ENCODE measurements at regions of chr1 and their contacts with region 1.

Region 1: DNA sequence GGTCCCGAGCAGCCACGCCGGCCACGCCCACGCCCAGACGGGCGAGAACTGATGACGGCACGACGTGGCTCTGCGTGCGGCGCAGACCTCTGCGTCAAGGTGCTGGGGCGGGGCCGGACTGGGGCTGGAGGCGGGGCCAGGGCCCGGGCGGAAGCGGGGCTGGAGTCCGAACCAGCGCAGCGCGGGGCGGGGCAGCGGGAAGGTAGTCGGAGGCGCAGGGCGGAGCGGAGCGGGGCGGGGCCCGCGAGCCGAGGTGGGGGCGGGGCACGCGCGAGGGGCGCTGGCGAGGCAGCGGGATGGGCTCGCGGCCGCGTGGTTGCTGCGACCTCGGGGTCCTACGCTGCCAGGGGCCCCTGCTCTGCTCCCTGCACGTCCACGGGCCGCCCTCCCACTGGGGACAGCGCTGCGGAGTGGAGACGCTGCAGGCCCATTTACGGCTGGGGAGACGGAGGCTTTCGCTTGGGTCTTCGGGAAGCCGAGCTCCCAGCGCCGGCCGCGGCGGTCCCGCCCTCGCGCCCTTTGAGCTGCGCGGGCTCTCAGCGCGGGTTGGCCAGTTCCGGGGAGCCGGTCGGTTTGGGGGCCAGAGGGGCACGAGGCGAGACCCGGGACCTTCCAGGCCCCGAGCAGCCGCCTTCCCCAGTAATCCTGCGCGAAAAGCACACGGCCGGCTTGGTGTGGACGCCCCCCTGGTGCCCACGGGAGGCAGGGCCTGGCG is at the start of gene PEX10:
- DNase-seq: peak; percentile 96 to 98 (median 97)
- H3K4me3 ChIP-seq: peak within 1 kb of the TSS; percentile 47 to 70
- H3K4me3 Mint-ChIP-seq: peak within 1 kb of the TSS; percentile 82 to 94 (median 87)
- H3K27ac ChIP-seq: peak within 1 kb of the TSS; percentile 84
- H3K27ac Mint-ChIP-seq: peak within 1 kb of the TSS; percentile 75 to 99 (median 92)
- H3K4me1 ChIP-seq: peaks cover 55% of the 10 kb centered on the region
- H3K4me1 Mint-ChIP-seq: peaks cover 17 to 51% (median 32%) of the 10 kb centered on the region in 4 donors
- H3K27me3 ChIP-seq: no peaks in the 10 kb centered on the region
- H3K27me3 Mint-ChIP-seq: no peaks in the 10 kb centered on the region
- total RNA-seq, gene PEX10: 11.7 to 13.0 TPM

Region 2: GRCh38 chr1:2441746-2442145 is 29.1 kb after region 1 on chr1:
- CTCF ChIA-PET with region 1: no interaction called
- POLR2A ChIA-PET with region 1: no interaction called
- intact Hi-C with region 1: no loop called
- DNase-seq: no peak
- H3K4me3 ChIP-seq: no peak overlapping the region
- H3K4me3 Mint-ChIP-seq: no peak overlapping the region
- H3K27ac ChIP-seq: no peak overlapping the region
- H3K27ac Mint-ChIP-seq: no peak overlapping the region
- H3K4me1 ChIP-seq: peaks cover 5% of the 10 kb centered on the region
- H3K4me1 Mint-ChIP-seq: peaks cover 0 to 5% (median 1%) of the 10 kb centered on the region in 4 donors
- H3K27me3 ChIP-seq: peaks cover 5% of the 10 kb centered on the region
- H3K27me3 Mint-ChIP-seq: peaks cover 0 to 5% of the 10 kb centered on the region in 2 donors

Region 3: DNA sequence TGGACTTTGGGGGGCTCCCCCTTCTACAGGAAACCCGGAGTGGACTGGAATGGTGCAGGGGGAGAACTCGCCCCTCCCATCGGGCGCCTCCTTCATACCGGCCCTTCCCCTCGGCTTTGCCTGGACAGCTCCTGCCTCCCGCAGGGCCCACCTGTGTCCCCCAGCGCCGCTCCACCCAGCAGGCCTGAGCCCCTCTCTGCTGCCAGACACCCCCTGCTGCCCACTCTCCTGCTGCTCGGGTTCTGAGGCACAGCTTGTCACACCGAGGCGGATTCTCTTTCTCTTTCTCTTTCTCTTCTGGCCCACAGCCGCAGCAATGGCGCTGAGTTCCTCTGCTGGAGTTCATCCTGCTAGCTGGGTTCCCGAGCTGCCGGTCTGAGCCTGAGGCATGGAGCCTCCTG is 143.6 kb after region 1 on chr1 and contains the start of gene TNFRSF14:
- CTCF ChIA-PET with region 1: interaction called, 12 read pairs
- POLR2A ChIA-PET with region 1: interaction called, 36 read pairs
- intact Hi-C with region 1: no loop called
- DNase-seq: peak; percentile 77 to 88 (median 78)
- H3K4me3 ChIP-seq: peak within 1 kb of the TSS; percentile 95 to 98
- H3K4me3 Mint-ChIP-seq: peak within 1 kb of the TSS; percentile 92 to 99 (median 96)
- H3K27ac ChIP-seq: peak within 1 kb of the TSS; percentile 98
- H3K27ac Mint-ChIP-seq: peak within 1 kb of the TSS; percentile 95 to 100 (median 98)
- H3K4me1 ChIP-seq: peaks cover 43% of the 10 kb centered on the region
- H3K4me1 Mint-ChIP-seq: peaks cover 9 to 50% (median 30%) of the 10 kb centered on the region in 4 donors
- H3K27me3 ChIP-seq: no peaks in the 10 kb centered on the region
- H3K27me3 Mint-ChIP-seq: no peaks in the 10 kb centered on the region
- total RNA-seq, gene TNFRSF14: 170 to 173 TPM

Region 4: DNA sequence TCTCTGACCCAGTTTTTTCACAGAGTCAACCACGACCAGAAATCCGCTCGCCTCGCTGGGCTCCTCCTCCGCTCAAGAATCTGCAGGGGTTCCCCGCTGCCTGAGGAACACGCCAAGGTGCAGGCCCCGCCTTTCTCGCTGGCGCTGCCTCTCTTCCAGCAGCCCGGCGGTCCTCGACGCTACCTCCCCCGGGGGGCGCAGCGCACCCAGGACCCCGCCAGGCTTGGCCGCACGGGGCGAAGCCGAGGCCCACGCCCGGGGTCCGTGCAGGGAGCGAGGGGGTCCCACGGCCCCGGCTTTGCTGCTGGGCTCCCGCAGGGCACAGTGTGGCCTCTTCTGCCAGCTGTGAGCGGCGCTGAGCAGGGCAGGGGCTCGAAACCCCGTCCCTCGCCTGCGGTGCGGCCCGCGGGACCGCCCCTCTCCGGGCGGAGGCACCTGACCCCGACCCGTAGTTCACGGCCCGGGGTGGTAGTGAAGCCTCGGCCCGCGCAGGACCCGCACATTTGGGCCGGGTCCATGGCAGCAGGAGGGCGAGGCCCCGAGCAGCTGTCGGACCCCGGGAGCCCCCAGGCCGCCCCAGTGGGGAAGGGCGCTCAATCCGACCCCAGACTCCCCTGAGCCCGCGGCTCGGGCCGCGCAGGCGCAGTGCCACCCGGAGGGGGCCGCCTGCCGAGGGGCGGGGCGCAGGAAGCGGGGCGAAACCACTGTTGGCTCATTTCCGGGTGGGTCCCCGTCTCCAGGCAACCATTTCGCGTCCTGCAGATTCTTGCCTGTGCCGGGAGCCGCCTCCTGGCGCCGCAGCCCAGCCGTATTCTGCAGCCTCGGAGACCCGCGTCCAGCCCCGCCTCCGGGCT is 230.1 kb after region 1 on chr1:
- CTCF ChIA-PET with region 1: no interaction called
- POLR2A ChIA-PET with region 1: interaction called, 3 read pairs
- intact Hi-C with region 1: loop called (anchors 1 kb)
- DNase-seq: peak; percentile 95 to 96 (median 95)
- H3K4me3 ChIP-seq: peak overlapping the region; percentile 69 to 83
- H3K4me3 Mint-ChIP-seq: peak overlapping the region; percentile 85 to 94 (median 88)
- H3K27ac ChIP-seq: peak overlapping the region; percentile 99
- H3K27ac Mint-ChIP-seq: peak overlapping the region; percentile 85 to 99 (median 96)
- H3K4me1 ChIP-seq: peaks cover 16% of the 10 kb centered on the region
- H3K4me1 Mint-ChIP-seq: peaks cover 2 to 21% (median 10%) of the 10 kb centered on the region in 4 donors
- H3K27me3 ChIP-seq: no peaks in the 10 kb centered on the region
- H3K27me3 Mint-ChIP-seq: no peaks in the 10 kb centered on the region

Region 5: GRCh38 chr1:2801535-2802291 is 389.0 kb after region 1 on chr1 and contains the start of gene TTC34:
- CTCF ChIA-PET with region 1: no interaction called
- POLR2A ChIA-PET with region 1: no interaction called
- intact Hi-C with region 1: loop called (anchors 5 kb)
- DNase-seq: peak in 4 of 5 donors; percentile 26 to 39 (median 33)
- H3K4me3 ChIP-seq: no peak within 1 kb of the TSS
- H3K4me3 Mint-ChIP-seq: no peak within 1 kb of the TSS
- H3K27ac ChIP-seq: no peak within 1 kb of the TSS
- H3K27ac Mint-ChIP-seq: no peak within 1 kb of the TSS
- H3K4me1 ChIP-seq: no peaks in the 10 kb centered on the region
- H3K4me1 Mint-ChIP-seq: no peaks in the 10 kb centered on the region
- H3K27me3 ChIP-seq: no peaks in the 10 kb centered on the region
- H3K27me3 Mint-ChIP-seq: peaks cover 5 to 6% of the 10 kb centered on the region in 2 donors
- total RNA-seq, gene TTC34: 4.8 to 4.9 TPM

Region 6: DNA sequence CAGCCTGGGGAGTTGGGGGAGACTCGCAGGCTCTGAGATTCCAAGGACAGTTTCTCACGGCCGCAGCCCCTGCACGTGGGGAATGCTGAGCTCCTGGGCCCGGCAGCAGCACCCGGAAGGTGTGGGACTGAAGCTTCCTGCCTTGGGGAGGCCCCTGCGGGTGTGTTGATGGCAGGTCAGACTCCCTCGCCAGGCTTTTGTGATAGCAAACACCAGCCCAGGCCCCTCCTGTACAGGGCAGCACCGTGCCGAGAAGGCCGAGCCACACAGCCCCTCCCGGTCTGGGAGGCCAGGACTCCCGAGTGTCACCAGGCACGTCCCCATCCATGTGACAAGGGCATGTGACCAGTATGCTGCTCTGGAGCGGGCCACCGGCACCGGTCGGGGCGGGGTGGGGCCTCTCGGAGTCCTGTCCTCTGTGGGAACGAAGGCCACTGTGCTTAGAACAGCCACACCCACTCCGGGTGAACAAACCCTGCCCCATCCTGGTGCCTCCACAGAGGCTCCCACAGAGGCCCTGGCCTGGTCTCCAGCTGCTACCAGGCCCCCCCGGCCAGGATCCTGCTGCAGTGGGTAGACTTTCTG is 1010.7 kb after region 1 on chr1:
- CTCF ChIA-PET with region 1: no interaction called
- POLR2A ChIA-PET with region 1: no interaction called
- intact Hi-C with region 1: loop called (anchors 5 kb)
- DNase-seq: no peak
- H3K4me3 ChIP-seq: no peak overlapping the region
- H3K4me3 Mint-ChIP-seq: no peak overlapping the region
- H3K27ac ChIP-seq: no peak overlapping the region
- H3K27ac Mint-ChIP-seq: no peak overlapping the region
- H3K4me1 ChIP-seq: no peaks in the 10 kb centered on the region
- H3K4me1 Mint-ChIP-seq: peaks cover 0 to 5% (median 0%) of the 10 kb centered on the region in 4 donors
- H3K27me3 ChIP-seq: no peaks in the 10 kb centered on the region
- H3K27me3 Mint-ChIP-seq: peaks cover 6 to 8% of the 10 kb centered on the region in 2 donors